CD4-positive, alpha-beta memory T cell (primary cell): ENCODE measurements at regions of chr4 and their contacts with region 1.

Region 1: DNA sequence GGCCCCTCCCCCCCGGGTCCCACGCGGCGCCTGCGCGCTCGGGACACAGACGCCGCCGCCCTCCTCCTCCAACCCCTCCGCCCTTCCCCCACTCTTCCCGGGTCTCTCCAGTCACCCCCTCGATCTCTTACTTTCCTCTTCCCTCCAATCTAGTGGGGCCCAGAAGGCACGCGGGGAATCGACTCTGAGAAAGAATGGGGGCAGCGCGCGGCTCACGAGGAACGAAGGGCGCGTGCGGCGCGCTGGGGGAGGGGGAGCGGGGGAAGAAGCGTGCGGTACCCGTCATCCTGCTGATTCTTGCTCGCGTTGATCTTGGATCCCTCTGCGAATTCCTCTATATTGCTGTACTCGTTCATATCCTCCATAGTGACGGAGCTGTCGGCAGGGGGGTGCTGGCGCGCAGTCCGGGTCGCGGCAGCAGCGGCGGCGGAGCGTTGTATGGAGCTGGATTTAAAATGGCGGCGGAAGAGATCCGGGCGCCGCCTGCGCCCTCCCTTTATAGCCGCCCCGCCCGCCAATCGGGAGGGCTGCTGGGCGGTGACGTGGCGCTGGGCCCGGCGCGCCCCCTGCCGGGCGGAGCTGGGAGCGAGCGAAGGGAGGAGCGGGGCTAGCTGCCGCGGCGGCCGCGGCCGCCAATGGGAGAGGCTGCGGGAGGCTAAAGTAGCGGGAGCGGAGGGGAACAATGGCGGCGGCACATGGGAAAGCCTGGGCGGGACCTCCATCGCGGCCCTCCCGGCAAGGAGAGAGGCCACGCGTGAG is 1.1 kb downstream of the HNRNPDL start:
- DNase-seq: peak; percentile 90 to 96 (median 93)
- H3K4me3 ChIP-seq: peak overlapping the region; percentile 66 to 73
- H3K4me3 Mint-ChIP-seq: peak overlapping the region; percentile 98 to 100 (median 100)
- H3K27ac ChIP-seq: peak overlapping the region; percentile 99
- H3K27ac Mint-ChIP-seq: peak overlapping the region; percentile 97 to 100 (median 100)
- H3K4me1 ChIP-seq: peaks cover 64% of the 10 kb centered on the region
- H3K4me1 Mint-ChIP-seq: peaks cover 41 to 83% (median 59%) of the 10 kb centered on the region in 4 donors
- H3K27me3 ChIP-seq: no peaks in the 10 kb centered on the region
- H3K27me3 Mint-ChIP-seq: no peaks in the 10 kb centered on the region

Region 2: GRCh38 chr4:81494031-81494431 is 935.1 kb before region 1 on chr4:
- CTCF ChIA-PET with region 1: no interaction called
- POLR2A ChIA-PET with region 1: interaction called, 8 read pairs
- intact Hi-C with region 1: loop called (anchors 5 kb)
- DNase-seq: peak in 2 of 5 donors; percentile 30 to 45
- H3K4me3 ChIP-seq: no peak overlapping the region
- H3K4me3 Mint-ChIP-seq: peak overlapping the region; percentile 73 to 88 (median 80)
- H3K27ac ChIP-seq: peak overlapping the region; percentile 59
- H3K27ac Mint-ChIP-seq: peak overlapping the region; percentile 84 to 96 (median 95)
- H3K4me1 ChIP-seq: peaks cover 41% of the 10 kb centered on the region
- H3K4me1 Mint-ChIP-seq: peaks cover 26 to 49% (median 39%) of the 10 kb centered on the region in 4 donors
- H3K27me3 ChIP-seq: no peaks in the 10 kb centered on the region
- H3K27me3 Mint-ChIP-seq: no peaks in the 10 kb centered on the region

Region 3: GRCh38 chr4:82360298-82361177 is 68.6 kb before region 1 on chr4:
- CTCF ChIA-PET with region 1: interaction called, 21 read pairs
- POLR2A ChIA-PET with region 1: interaction called, 21 read pairs
- intact Hi-C with region 1: no loop called
- DNase-seq: peak in 4 of 5 donors; percentile 39 to 42 (median 40)
- H3K4me3 ChIP-seq: no peak overlapping the region
- H3K4me3 Mint-ChIP-seq: peak overlapping the region in 5 of 8 donors; percentile 3 to 54 (median 17)
- H3K27ac ChIP-seq: peak overlapping the region; percentile 22
- H3K27ac Mint-ChIP-seq: peak overlapping the region; percentile 30 to 88 (median 62)
- H3K4me1 ChIP-seq: peaks cover 98% of the 10 kb centered on the region
- H3K4me1 Mint-ChIP-seq: peaks cover 59 to 94% (median 77%) of the 10 kb centered on the region in 4 donors
- H3K27me3 ChIP-seq: no peaks in the 10 kb centered on the region
- H3K27me3 Mint-ChIP-seq: no peaks in the 10 kb centered on the region

Region 4: DNA sequence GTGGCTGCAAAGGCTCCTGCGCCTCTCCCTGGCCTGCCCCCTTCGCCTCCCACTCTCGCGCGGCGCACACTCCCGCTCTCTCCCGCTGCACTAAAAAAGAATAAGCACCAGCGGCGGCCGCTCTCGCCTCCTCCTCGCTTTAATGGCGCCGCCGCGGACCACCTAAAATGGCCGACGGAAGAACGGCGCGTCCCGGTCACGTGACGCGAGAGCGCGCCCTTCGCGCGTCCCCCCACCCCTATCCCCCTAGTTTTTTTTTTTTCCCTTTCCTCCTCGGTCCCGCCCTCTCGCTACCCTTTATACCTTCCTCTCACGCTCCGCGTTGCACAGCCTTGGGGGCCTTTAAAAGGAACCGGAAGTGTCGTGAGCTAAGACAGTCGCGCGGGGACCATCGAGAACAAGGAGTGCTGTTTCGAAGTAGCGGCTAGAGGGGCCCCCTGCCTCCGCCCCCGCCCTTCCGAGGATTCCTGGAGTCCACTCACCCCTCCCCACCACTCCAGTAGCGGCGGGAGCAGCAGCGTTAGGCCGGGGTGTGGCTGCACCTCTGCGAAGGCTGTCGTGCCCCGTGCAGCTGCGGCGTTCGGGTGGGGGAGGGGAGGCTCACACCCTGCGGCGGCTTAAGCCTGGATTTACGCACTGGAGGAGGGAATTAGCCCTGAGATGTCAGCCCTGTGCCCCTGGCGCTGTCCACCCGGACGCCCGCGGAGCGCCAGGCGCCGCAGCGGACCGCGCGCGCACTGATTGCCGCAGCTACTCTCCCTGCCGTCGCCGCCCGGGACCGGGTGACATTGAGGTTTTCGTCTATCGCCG is 55.1 kb before region 1 on chr4 and contains the start of gene HNRNPD:
- CTCF ChIA-PET with region 1: interaction called, 27 read pairs
- POLR2A ChIA-PET with region 1: interaction called, 122 read pairs
- intact Hi-C with region 1: loop called (anchors 1 kb)
- DNase-seq: peak; percentile 91 to 96 (median 95)
- H3K4me3 ChIP-seq: peak within 1 kb of the TSS; percentile 95 to 96
- H3K4me3 Mint-ChIP-seq: peak within 1 kb of the TSS; percentile 96 to 100 (median 98)
- H3K27ac ChIP-seq: peak within 1 kb of the TSS; percentile 98
- H3K27ac Mint-ChIP-seq: peak within 1 kb of the TSS; percentile 98 to 100 (median 99)
- H3K4me1 ChIP-seq: peaks cover 53% of the 10 kb centered on the region
- H3K4me1 Mint-ChIP-seq: peaks cover 32 to 67% (median 48%) of the 10 kb centered on the region in 4 donors
- H3K27me3 ChIP-seq: no peaks in the 10 kb centered on the region
- H3K27me3 Mint-ChIP-seq: peaks cover 0 to 2% of the 10 kb centered on the region in 2 donors
- total RNA-seq, gene HNRNPD: 234 to 247 TPM

Region 5: DNA sequence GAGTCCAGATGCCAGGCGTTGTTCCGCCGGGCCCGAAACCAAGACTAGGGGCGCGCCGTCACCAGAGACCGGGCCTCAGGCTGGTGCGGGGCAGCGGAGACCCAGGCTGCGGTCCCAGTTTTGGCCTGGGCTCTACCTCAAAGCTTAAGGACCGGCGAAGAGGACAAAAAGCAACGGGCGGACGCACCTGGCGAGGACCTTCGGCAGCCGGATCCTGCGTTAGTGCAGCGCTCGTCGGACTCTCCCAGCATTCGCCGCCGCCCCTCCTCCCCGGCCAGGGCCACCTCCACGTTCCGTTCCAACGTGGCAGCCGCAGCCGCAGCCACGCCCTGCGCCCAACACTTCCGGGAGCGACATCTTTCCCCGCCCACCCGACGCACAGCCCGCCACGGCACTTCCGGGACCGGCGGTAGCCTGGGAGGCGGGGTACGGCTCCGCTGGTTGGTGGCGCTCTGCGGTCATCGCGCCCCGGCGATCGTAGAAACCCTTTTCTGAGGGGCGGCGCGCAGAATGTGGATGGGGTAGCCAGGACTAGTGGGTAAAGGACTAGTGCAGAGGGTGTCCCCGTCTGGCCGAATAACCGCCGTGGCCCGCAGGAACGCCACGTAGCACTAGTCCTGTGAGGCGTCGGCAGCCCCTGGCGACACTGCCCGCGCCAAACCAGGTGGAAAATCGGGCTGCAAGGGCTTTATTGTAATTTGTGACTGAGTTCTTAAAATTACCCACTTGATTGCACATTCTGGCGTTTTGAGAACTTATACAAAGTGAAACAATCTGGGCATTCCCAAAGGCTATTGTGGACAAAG is 462.0 kb after region 1 on chr4 and contains the start of gene SEC31A:
- CTCF ChIA-PET with region 1: no interaction called
- POLR2A ChIA-PET with region 1: interaction called, 6 read pairs
- intact Hi-C with region 1: loop called (anchors 1 kb)
- DNase-seq: peak; percentile 95 to 96 (median 96)
- H3K4me3 ChIP-seq: peak within 1 kb of the TSS; percentile 66 to 91
- H3K4me3 Mint-ChIP-seq: peak within 1 kb of the TSS; percentile 89 to 96 (median 94)
- H3K27ac ChIP-seq: peak within 1 kb of the TSS; percentile 99
- H3K27ac Mint-ChIP-seq: peak within 1 kb of the TSS; percentile 95 to 99 (median 98)
- H3K4me1 ChIP-seq: peaks cover 32% of the 10 kb centered on the region
- H3K4me1 Mint-ChIP-seq: peaks cover 22 to 51% (median 32%) of the 10 kb centered on the region in 4 donors
- H3K27me3 ChIP-seq: no peaks in the 10 kb centered on the region
- H3K27me3 Mint-ChIP-seq: no peaks in the 10 kb centered on the region
- total RNA-seq, gene SEC31A: 157 to 167 TPM

Region 6: DNA sequence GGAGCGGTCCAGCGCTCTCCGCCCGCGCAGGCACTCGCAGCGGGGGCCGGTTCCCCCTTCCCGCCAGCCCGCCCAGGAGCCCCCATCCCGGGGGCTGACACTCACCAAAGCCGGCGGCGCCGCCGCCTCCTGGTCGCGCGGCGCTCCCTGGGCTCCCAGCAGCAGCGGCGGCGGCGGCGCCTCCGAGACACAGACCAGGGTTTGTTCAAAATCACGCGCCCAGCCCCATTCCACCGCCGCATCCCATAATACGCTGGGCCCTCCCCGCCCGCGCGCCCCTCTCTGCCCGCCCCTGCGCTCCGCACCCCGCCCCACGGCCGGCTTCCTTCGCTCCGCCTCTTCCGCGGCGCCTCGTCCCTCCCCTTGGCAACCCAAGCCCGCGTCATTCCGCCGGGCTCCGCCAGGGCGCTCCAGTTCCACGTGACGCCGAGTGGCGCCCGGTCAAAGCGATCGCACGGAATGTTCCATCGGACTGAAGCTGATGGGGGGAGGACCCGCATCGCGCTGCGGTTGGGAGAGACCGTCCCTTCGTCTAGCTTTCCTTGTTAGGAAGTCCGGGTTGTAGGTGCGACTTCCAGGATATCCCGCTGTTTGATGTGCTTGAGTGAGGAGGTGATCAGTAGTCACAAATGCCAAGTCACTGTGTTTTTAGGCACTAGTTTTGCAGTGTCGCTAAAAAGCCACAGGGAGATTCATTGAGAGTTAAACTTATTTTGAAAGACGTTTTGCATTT is 583.7 kb after region 1 on chr4:
- CTCF ChIA-PET with region 1: interaction called, 5 read pairs
- POLR2A ChIA-PET with region 1: interaction called, 10 read pairs
- intact Hi-C with region 1: loop called (anchors 1 kb)
- DNase-seq: peak; percentile 96 to 99 (median 97)
- H3K4me3 ChIP-seq: peak overlapping the region; percentile 88 to 98
- H3K4me3 Mint-ChIP-seq: peak overlapping the region; percentile 91 to 97 (median 95)
- H3K27ac ChIP-seq: peak overlapping the region; percentile 89
- H3K27ac Mint-ChIP-seq: peak overlapping the region; percentile 87 to 97 (median 94)
- H3K4me1 ChIP-seq: peaks cover 43% of the 10 kb centered on the region
- H3K4me1 Mint-ChIP-seq: peaks cover 33 to 52% (median 39%) of the 10 kb centered on the region in 4 donors
- H3K27me3 ChIP-seq: no peaks in the 10 kb centered on the region
- H3K27me3 Mint-ChIP-seq: no peaks in the 10 kb centered on the region

Region 7: GRCh38 chr4:83455281-83456129 is 1026.4 kb after region 1 on chr4 and contains the starts of genes HELQ and MRPS18C:
- CTCF ChIA-PET with region 1: no interaction called
- POLR2A ChIA-PET with region 1: interaction called, 8 read pairs
- intact Hi-C with region 1: loop called (anchors 1 kb)
- DNase-seq: peak; percentile 94 to 98 (median 98)
- H3K4me3 ChIP-seq: peak within 1 kb of the TSS; percentile 90 to 96
- H3K4me3 Mint-ChIP-seq: peak within 1 kb of the TSS; percentile 99 to 100 (median 100)
- H3K27ac ChIP-seq: peak within 1 kb of the TSS; percentile 100
- H3K27ac Mint-ChIP-seq: peak within 1 kb of the TSS; percentile 100
- H3K4me1 ChIP-seq: peaks cover 37% of the 10 kb centered on the region
- H3K4me1 Mint-ChIP-seq: peaks cover 29 to 64% (median 42%) of the 10 kb centered on the region in 4 donors
- H3K27me3 ChIP-seq: no peaks in the 10 kb centered on the region
- H3K27me3 Mint-ChIP-seq: no peaks in the 10 kb centered on the region
- total RNA-seq, gene HELQ: 48.1 to 49.0 TPM
- total RNA-seq, gene MRPS18C: 45.7 to 51.4 TPM